ENCODE measurements at regions of chr6 and their contacts with region 1.

Region 1: GRCh38 chr6:26520853-26521599 is 17.1 kb upstream of the HMGN4 start:
- DNase-seq: peak; percentile 95
- H3K4me3 ChIP-seq: peak overlapping the region; percentile 55 to 65 (median 61)
- H3K27ac ChIP-seq: peak overlapping the region; percentile 96 to 99 (median 98)
- H3K4me1 ChIP-seq: peaks cover 0 to 32% (median 6%) of the 10 kb centered on the region in 4 donors
- H3K27me3 ChIP-seq: no peaks in the 10 kb centered on the region
- CTCF ChIP-seq: no peak
- EP300 ChIP-seq: no peak
- POLR2A ChIP-seq: no peak

Region 2: GRCh38 chr6:26473758-26474438 is 47.1 kb before region 1 on chr6:
- intact Hi-C with region 1: loop called (anchors 2 kb)
- DNase-seq: peak; percentile 92
- H3K4me3 ChIP-seq: peak overlapping the region; percentile 34 to 53 (median 46)
- H3K27ac ChIP-seq: peak overlapping the region; percentile 88 to 92 (median 90)
- H3K4me1 ChIP-seq: peaks cover 0 to 30% (median 16%) of the 10 kb centered on the region in 4 donors
- H3K27me3 ChIP-seq: no peaks in the 10 kb centered on the region
- CTCF ChIP-seq: no peak
- EP300 ChIP-seq: no peak
- POLR2A ChIP-seq: peak; percentile 67 to 79

Region 3: DNA sequence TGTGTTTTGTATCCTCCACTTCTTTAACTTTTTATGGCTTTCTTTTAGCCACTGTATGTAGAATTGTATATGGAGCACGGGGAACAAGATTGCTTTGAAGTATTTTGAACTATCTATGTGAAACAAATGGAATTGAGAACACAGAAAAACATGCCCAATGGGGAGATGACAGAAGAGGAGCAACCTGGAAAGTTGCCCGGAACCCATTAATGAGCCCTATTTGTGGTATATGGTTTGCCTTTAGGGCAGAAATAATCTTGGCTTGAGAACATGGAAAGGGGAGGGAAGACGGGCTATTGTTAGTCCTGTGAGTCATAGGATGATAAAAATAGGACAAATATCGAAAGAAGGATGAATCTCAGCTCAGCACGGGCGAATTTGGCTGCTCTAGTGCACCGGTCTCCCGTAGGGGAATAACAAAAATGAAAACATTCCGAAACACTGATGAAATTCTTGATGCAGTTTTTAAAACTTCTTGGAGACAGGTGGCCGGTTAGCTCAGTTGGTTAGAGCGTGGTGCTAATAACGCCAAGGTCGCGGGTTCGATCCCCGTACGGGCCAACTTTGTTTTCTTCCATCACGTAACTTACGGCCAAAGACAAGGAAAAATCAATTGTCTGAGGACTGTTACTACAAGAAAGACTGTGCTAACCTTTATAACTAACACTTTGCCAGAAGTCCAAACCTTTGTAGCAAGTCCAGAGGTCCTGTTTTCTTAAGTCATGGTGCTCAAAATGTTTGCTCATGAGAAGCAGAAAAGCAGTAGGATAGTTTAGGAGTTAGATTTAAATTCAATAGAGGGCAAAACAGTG is 32.8 kb after region 1 on chr6:
- intact Hi-C with region 1: loop called (anchors 1 kb)
- DNase-seq: peak; percentile 91
- H3K4me3 ChIP-seq: peak overlapping the region; percentile 36 to 51 (median 48)
- H3K27ac ChIP-seq: peak overlapping the region; percentile 69 to 89 (median 79)
- H3K4me1 ChIP-seq: peaks cover 4 to 24% (median 9%) of the 10 kb centered on the region in 4 donors
- H3K27me3 ChIP-seq: no peaks in the 10 kb centered on the region
- CTCF ChIP-seq: no peak
- EP300 ChIP-seq: no peak
- POLR2A ChIP-seq: no peak